ENCODE measurements at regions of chr20 and their contacts with region 1.

Region 1: GRCh38 chr20:760751-761417 is 7.4 kb downstream of the SLC52A3 start:
- DNase-seq: peak; percentile 76
- ATAC-seq: peak; percentile 89
- H3K4me3 Mint-ChIP-seq: peak overlapping the region; percentile 12; the same call in 1 of the 2 replicates
- H3K27ac Mint-ChIP-seq: no peak overlapping the region
- H3K4me1 Mint-ChIP-seq: peaks cover 11% of the 10 kb centered on the region
- H3K27me3 Mint-ChIP-seq: peaks cover 13% of the 10 kb centered on the region
- CTCF ChIP-seq: peak; percentile 100

Region 2: GRCh38 chr20:400454-401275 is 360.2 kb before region 1 on chr20:
- CTCF ChIA-PET with region 1: no interaction called
- POLR2A ChIA-PET with region 1: no interaction called
- DNase-seq: no peak
- ATAC-seq: peak; percentile 93
- H3K4me3 Mint-ChIP-seq: no peak overlapping the region
- H3K27ac Mint-ChIP-seq: peak overlapping the region; percentile 58
- H3K4me1 Mint-ChIP-seq: peaks cover 15% of the 10 kb centered on the region
- H3K27me3 Mint-ChIP-seq: peaks cover 8% of the 10 kb centered on the region; the same call in 1 of the 2 replicates
- CTCF ChIP-seq: no peak

Region 3: GRCh38 chr20:775679-776135 is 14.8 kb after region 1 on chr20:
- CTCF ChIA-PET with region 1: interaction called, 24 read pairs
- POLR2A ChIA-PET with region 1: no interaction called
- DNase-seq: peak; percentile 77
- ATAC-seq: peak; percentile 96
- H3K4me3 Mint-ChIP-seq: peak overlapping the region; percentile 67
- H3K27ac Mint-ChIP-seq: peak overlapping the region; percentile 71
- H3K4me1 Mint-ChIP-seq: peaks cover 44% of the 10 kb centered on the region
- H3K27me3 Mint-ChIP-seq: no peaks in the 10 kb centered on the region
- CTCF ChIP-seq: no peak

Region 4: DNA sequence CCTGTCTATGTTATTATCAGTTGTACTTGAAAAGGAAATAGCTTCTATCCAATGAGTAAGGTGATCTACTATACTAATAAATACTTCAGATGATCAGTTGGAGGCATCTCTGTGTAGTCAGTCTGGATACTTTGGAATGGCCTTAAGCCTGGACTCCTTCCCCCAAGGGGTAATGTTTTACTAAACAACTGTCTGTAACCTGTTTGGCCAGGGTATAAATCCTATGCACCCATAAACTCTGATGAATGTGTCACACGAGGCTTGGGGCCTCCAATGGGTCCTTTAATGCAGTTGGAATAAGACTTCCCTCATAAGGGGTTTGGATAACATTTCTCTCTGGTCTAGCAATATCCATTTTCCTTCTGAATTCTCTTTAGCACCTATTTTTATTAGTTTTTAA is 26.9 kb after region 1 on chr20:
- CTCF ChIA-PET with region 1: no interaction called
- POLR2A ChIA-PET with region 1: no interaction called
- DNase-seq: no peak
- ATAC-seq: no peak
- H3K4me3 Mint-ChIP-seq: no peak overlapping the region
- H3K27ac Mint-ChIP-seq: no peak overlapping the region
- H3K4me1 Mint-ChIP-seq: peaks cover 26% of the 10 kb centered on the region
- H3K27me3 Mint-ChIP-seq: peaks cover 20% of the 10 kb centered on the region
- CTCF ChIP-seq: no peak